HEK293 (cell line): ENCODE measurements at regions of chr11 and their contacts with region 1.

Region 1: DNA sequence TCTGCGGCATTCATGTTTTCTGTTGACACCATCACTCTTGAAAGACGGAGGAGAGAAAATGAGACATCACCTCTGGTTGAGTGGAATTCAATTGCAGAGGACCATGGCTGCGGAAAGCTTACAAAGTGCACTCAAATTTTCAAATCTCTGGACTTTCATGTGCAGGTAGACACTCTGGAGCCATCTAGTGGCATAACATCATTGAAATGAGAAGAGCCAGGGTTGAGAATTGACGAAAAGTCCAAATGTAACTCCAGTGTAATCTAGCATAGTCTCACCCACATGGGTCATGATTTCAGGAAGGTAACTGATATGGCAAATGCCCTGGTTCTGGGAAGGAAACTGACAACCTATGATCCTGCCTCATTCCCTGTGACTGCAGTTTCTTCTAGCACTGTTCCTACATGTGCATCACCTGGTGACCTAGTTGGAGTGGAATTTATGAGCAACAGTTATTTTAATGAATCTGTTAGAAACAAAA is 687.8 kb downstream of the KCNA4 start:
- H3K4me3 ChIP-seq: no peak overlapping the region
- H3K27ac ChIP-seq: no peak overlapping the region
- H3K4me1 ChIP-seq: no peaks in the 10 kb centered on the region
- CTCF ChIP-seq: no peak

Region 2: DNA sequence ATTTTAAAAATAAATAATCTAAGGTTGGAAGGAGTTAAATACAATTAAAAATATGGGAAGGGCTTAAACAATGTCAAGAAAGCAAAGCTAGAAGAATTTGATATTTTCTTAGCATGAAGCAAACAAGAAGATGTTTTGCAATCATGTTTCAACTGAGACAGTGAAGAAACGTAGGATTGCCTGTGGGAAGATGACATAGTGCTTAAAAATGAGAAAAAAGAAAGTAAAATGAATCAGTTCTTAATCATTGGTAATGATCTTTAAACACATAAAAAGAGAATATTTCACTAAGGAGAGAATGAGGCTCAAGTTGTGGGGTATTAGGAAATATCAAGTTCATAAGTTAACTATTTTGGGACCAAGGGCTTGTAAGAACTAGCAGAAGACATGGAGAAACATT is 365.8 kb before region 1 on chr11:
- CTCF ChIA-PET with region 1: no interaction called
- POLR2A ChIA-PET with region 1: no interaction called
- H3K4me3 ChIP-seq: no peak overlapping the region
- H3K27ac ChIP-seq: no peak overlapping the region
- H3K4me1 ChIP-seq: no peaks in the 10 kb centered on the region
- CTCF ChIP-seq: no peak

Region 3: DNA sequence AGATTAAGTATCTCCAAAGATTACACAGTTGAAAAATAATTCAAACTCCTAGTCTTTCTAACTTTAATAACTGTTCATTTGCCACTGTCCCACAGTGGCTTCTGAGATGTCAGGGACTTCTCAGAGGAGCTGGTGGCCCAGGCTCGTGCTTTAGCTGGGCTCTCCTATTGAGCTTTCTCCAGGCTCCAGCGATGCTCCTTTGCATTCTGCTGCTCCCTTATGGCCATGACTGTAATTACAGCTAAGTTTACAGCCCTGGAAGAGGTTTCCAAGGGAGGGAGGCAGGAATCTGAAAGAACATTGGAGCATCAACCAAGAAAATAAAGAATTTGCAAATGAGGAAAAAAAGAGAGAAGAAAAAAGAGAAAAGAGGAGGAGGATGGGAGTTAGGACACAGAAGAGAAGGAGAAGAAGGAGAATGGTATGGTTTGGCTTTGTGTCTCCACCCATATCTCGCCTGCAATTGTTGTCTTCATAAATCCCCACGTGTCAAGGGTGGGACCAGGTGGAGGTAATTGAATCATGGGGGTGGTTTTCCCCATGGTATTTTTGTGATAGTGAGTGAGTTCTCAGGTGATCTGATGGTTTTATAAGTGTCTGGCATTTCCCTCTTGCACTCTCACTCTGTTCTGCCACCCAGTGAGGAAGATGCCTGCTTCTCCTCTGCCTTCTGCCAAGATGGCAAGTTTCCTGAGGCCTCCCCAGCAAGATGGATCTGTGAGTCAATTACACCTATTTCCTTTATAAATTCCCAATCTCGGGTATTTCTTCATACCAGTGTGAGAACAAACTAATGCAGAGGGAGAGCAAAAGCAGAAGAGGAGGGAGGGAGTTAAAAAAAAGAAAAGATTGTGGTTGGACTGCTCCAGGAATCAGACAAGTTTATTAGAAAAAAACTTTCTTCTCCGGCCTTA is 169.2 kb before region 1 on chr11:
- CTCF ChIA-PET with region 1: interaction called, 23 read pairs
- POLR2A ChIA-PET with region 1: no interaction called
- H3K4me3 ChIP-seq: no peak overlapping the region
- H3K27ac ChIP-seq: no peak overlapping the region
- H3K4me1 ChIP-seq: no peaks in the 10 kb centered on the region
- CTCF ChIP-seq: 0 out of 2 replicates have a peak, but pooled peaks have one; percentile 11

Region 4: GRCh38 chr11:29272019-29272654 is 56.9 kb before region 1 on chr11:
- CTCF ChIA-PET with region 1: interaction called, 22 read pairs
- POLR2A ChIA-PET with region 1: no interaction called
- H3K4me3 ChIP-seq: no peak overlapping the region
- H3K27ac ChIP-seq: no peak overlapping the region
- H3K4me1 ChIP-seq: no peaks in the 10 kb centered on the region
- CTCF ChIP-seq: no peak

Region 5: DNA sequence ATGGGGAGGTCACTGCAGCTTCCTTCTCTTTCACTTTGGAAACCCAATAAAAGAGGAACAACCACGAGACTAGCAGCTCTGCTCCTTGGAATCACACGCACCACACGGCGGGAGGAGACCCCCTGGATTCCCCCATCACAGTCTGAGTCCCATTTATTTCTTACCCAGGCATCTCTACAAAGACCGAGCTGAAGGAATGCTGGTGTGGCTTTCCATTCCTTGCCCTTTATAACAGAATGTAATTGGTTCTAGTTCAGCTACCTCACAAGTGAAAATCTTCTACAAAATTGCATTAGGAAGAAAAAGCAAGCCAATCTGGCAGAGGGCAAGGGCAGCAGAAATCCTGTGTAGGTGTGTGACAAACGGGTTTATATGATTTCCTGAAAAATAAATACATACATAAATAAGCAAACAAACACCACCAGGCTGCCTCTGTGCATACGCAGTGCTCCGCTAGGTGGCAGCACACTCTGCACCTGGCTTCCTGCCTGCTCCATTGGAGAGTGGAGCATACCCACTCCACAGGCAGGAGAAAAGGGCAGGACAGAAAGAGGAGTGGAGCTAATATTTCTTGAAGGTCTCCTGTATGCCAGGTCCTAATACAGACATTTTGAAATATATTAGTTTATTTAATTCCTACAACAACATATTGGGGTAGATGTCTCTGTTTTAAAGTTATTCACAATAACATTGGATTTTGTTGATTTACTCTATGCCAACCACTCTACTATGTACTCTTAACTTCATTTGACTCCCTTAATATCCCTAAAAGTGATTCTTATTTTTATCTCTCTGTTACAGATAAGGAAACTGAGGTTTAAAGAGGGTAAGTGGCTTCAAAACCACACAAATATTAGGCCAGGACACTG is 14.7 kb after region 1 on chr11:
- CTCF ChIA-PET with region 1: interaction called, 14 read pairs
- POLR2A ChIA-PET with region 1: no interaction called
- H3K4me3 ChIP-seq: no peak overlapping the region; the same call in 1 of the 2 replicates
- H3K27ac ChIP-seq: no peak overlapping the region
- H3K4me1 ChIP-seq: no peaks in the 10 kb centered on the region
- CTCF ChIP-seq: no peak